Activated CD4-positive, alpha-beta T cell treated with anti-CD3 and anti-CD28 coated beads for 36 hours (primary cell): ENCODE measurements at regions of chr10 and their contacts with region 1.

Region 1: GRCh38 chr10:43105102-43105785 is 28.4 kb downstream of the RET start:
- DNase-seq: peak; percentile 88
- ATAC-seq: peak; percentile 95
- H3K4me3 Mint-ChIP-seq: peak overlapping the region; percentile 46
- H3K27ac Mint-ChIP-seq: no peak overlapping the region
- H3K4me1 Mint-ChIP-seq: peaks cover 4% of the 10 kb centered on the region
- H3K27me3 Mint-ChIP-seq: peaks cover 19% of the 10 kb centered on the region

Region 2: GRCh38 chr10:42177077-42177792 is 928.0 kb before region 1 on chr10:
- CTCF ChIA-PET with region 1: no interaction called
- POLR2A ChIA-PET with region 1: no interaction called
- intact Hi-C with region 1: loop called in 1 of 2 experiments (anchors 2 kb)
- DNase-seq: peak; percentile 7
- ATAC-seq: no peak
- H3K4me3 Mint-ChIP-seq: no peak overlapping the region
- H3K27ac Mint-ChIP-seq: no peak overlapping the region
- H3K4me1 Mint-ChIP-seq: peaks cover 4% of the 10 kb centered on the region
- H3K27me3 Mint-ChIP-seq: peaks cover 45% of the 10 kb centered on the region

Region 3: DNA sequence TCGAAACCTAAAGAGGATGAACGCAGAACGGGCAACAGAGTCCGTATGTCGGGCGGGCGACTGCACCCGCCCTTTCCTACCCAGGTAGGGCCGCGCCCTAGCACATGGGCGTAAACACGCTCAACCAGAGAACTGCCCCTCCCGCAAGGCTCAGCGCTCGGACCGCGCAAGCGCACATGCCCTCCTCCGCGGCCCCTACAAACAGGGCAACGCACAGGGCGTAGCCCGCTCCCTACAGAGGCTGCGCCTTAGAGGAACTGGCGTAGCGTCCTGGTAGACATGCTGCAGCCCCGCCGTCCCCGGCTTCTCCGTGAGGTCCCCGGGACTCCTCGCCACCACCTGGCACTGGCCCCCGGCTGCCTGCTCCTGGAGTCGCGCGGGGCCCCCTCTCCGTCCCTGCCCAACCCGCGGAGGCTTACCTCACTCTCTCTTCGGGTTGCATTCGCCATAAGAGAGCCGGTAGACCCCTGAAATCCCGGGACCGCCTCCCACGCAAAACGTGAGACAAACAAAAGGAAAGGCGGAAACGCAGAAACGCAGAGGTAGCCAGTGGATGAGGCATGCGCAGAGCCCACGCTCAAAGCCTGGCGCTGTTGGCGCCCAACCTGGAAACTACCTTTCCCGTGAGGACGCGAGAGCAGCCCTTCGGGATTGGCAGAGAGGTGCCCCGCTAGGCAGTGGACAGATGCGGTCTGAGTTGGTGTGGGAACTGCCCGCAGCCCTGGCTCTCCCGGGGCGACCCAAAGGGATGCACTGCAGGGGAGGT is 467.0 kb before region 1 on chr10 and contains the start of gene ZNF33B:
- CTCF ChIA-PET with region 1: no interaction called
- POLR2A ChIA-PET with region 1: no interaction called
- intact Hi-C with region 1: loop called in 1 of 2 experiments (anchors 10 kb)
- DNase-seq: peak; percentile 97
- ATAC-seq: peak; percentile 95
- H3K4me3 Mint-ChIP-seq: peak within 1 kb of the TSS; percentile 88
- H3K27ac Mint-ChIP-seq: peak within 1 kb of the TSS; percentile 97
- H3K4me1 Mint-ChIP-seq: peaks cover 25% of the 10 kb centered on the region
- H3K27me3 Mint-ChIP-seq: no peaks in the 10 kb centered on the region
- total RNA-seq, gene ZNF33B: 7.4 to 10.5 TPM

Region 4: DNA sequence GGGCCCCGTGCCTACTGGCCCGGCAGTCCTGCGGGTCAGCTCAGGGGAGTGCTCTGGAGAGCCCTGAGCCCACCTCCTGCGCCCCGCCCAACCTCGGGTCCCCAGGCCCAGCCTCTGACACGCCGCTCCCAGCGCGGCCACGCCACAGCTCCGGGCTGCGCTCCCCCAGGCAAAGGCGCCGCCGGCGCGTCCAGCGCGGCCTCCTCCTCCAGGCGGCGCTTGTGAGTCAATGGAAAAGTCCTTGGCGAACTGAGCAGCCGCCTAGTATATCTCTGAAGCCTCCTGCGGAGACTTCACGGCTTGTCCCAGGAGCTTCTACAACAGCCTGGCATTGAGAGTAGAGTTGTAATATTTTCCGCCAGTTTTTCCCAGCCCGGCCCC is 352.1 kb before region 1 on chr10:
- CTCF ChIA-PET with region 1: interaction called, 4 read pairs
- POLR2A ChIA-PET with region 1: no interaction called
- intact Hi-C with region 1: loop called (anchors 1 to 2 kb)
- DNase-seq: peak; percentile 87
- ATAC-seq: peak; percentile 88
- H3K4me3 Mint-ChIP-seq: peak overlapping the region; percentile 59
- H3K27ac Mint-ChIP-seq: no peak overlapping the region
- H3K4me1 Mint-ChIP-seq: peaks cover 5% of the 10 kb centered on the region
- H3K27me3 Mint-ChIP-seq: peaks cover 45% of the 10 kb centered on the region

Region 5: DNA sequence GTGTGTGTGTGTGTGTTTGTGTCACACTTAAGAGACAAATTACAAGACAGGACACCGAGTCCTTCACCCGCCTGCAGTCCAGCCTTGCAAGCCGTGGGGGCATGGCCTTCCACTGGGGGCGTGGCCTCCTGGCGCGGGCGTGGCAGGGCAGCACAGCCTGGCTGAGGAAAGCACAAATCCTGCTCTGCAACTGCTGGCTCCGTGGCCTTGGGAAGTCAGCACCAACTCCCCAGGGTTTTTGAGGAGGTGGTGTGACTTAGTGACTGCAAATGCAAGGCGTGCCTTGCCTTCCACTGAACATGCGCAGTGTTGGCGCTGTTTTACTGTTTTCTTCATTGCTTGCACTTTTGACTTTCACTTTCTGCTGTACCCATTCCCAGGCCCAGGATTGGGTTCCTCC is 335.6 kb before region 1 on chr10:
- CTCF ChIA-PET with region 1: no interaction called
- POLR2A ChIA-PET with region 1: no interaction called
- intact Hi-C with region 1: no loop called
- DNase-seq: no peak
- ATAC-seq: no peak
- H3K4me3 Mint-ChIP-seq: no peak overlapping the region
- H3K27ac Mint-ChIP-seq: no peak overlapping the region
- H3K4me1 Mint-ChIP-seq: no peaks in the 10 kb centered on the region
- H3K27me3 Mint-ChIP-seq: peaks cover 25% of the 10 kb centered on the region

Region 6: GRCh38 chr10:42866115-42866995 is 238.9 kb before region 1 on chr10:
- CTCF ChIA-PET with region 1: interaction called, 3 read pairs
- POLR2A ChIA-PET with region 1: no interaction called
- intact Hi-C with region 1: loop called (anchors 1 kb)
- DNase-seq: peak; percentile 75
- ATAC-seq: peak; percentile 68
- H3K4me3 Mint-ChIP-seq: no peak overlapping the region
- H3K27ac Mint-ChIP-seq: no peak overlapping the region
- H3K4me1 Mint-ChIP-seq: peaks cover 4% of the 10 kb centered on the region
- H3K27me3 Mint-ChIP-seq: peaks cover 32% of the 10 kb centered on the region

Region 7: GRCh38 chr10:42933448-42934340 is 171.6 kb before region 1 on chr10:
- CTCF ChIA-PET with region 1: no interaction called
- POLR2A ChIA-PET with region 1: no interaction called
- intact Hi-C with region 1: loop called in 1 of 2 experiments (anchors 10 kb)
- DNase-seq: peak; percentile 47
- ATAC-seq: peak; percentile 55
- H3K4me3 Mint-ChIP-seq: peak overlapping the region; percentile 64
- H3K27ac Mint-ChIP-seq: no peak overlapping the region
- H3K4me1 Mint-ChIP-seq: peaks cover 10% of the 10 kb centered on the region
- H3K27me3 Mint-ChIP-seq: peaks cover 11% of the 10 kb centered on the region

Region 8: GRCh38 chr10:43076876-43077420 is 28.3 kb before region 1 on chr10 and contains the start of gene RET:
- CTCF ChIA-PET with region 1: interaction called, 4 read pairs
- POLR2A ChIA-PET with region 1: no interaction called
- intact Hi-C with region 1: loop called in 1 of 2 experiments (anchors 2 kb)
- DNase-seq: peak; percentile 53
- ATAC-seq: peak; percentile 56
- H3K4me3 Mint-ChIP-seq: peak within 1 kb of the TSS; percentile 32
- H3K27ac Mint-ChIP-seq: no peak within 1 kb of the TSS
- H3K4me1 Mint-ChIP-seq: peaks cover 7% of the 10 kb centered on the region
- H3K27me3 Mint-ChIP-seq: peaks cover 29% of the 10 kb centered on the region
- total RNA-seq, gene RET: 0.19 to 0.32 TPM